Gastrocnemius medialis (tissue), 4 donors: ENCODE measurements at regions of chr3 and their contacts with region 1.

Region 1: GRCh38 chr3:138915503-138916498 is 31.1 kb downstream of the FOXL2 start:
- DNase-seq: peak; percentile 82 to 94
- ATAC-seq: peak; percentile 91 to 93
- H3K4me3 ChIP-seq: peak overlapping the region; percentile 80 to 98 (median 87)
- H3K27ac ChIP-seq: peak overlapping the region; percentile 92 to 95 (median 94)
- H3K4me1 ChIP-seq: peaks cover 3 to 4% of the 10 kb centered on the region in 2 donors
- H3K27me3 ChIP-seq: no peaks in the 10 kb centered on the region
- CTCF ChIP-seq: peak; percentile 86 to 94 (median 89)
- POLR2A ChIP-seq: no peak

Region 2: DNA sequence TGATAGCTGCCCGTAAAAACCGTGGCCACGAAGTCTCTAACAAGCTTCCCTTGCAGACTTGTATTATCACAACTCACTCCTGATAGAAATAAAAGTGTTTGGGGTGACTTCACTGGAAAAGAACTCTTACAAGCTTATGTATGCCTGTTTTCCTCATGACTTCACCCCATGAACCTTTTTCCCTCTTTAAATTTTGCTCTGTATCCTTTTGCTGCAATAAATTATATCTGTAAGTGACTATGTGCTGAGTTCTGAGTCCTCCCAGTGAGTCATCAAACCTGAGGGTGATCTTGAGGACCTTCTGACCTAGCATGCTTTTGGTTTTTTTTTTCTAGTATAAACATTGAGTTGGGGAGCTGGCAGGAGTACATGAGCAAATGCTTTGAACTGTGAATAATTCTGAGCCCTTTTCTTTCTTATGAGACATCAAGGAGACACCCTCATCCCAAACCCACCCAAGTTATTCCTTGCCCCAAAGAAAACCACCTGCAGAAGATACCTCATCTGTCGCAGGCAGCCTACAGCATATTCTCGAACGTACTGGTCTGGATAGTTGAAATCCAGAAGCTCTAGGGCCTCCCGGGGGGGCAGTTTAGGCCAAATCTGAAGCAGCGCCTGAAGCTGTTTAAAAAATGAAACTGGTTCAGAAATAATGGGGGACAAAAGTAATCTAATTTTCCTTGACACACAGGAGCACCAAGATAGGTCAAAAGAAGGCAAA is 221.4 kb before region 1 on chr3:
- in situ Hi-C with region 1: loop called in 3 of 4 experiments (anchors 5 kb)
- intact Hi-C with region 1: loop called (anchors 2 kb)
- DNase-seq: no peak
- ATAC-seq: no peak
- H3K4me3 ChIP-seq: no peak overlapping the region
- H3K27ac ChIP-seq: no peak overlapping the region
- H3K4me1 ChIP-seq: no peaks in the 10 kb centered on the region
- H3K27me3 ChIP-seq: no peaks in the 10 kb centered on the region
- CTCF ChIP-seq: no peak
- POLR2A ChIP-seq: no peak

Region 3: GRCh38 chr3:138774529-138775253 is 141.1 kb before region 1 on chr3:
- in situ Hi-C with region 1: no loop called
- intact Hi-C with region 1: loop called (anchors 10 kb)
- DNase-seq: peak; percentile 75 to 89
- ATAC-seq: peak; percentile 99
- H3K4me3 ChIP-seq: no peak overlapping the region
- H3K27ac ChIP-seq: peak overlapping the region; percentile 77 to 86 (median 78)
- H3K4me1 ChIP-seq: peaks cover 26 to 43% of the 10 kb centered on the region in 2 donors
- H3K27me3 ChIP-seq: no peaks in the 10 kb centered on the region
- CTCF ChIP-seq: no peak
- POLR2A ChIP-seq: no peak

Region 4: GRCh38 chr3:139718415-139718814 is 802.6 kb after region 1 on chr3:
- in situ Hi-C with region 1: no loop called
- intact Hi-C with region 1: no loop called
- DNase-seq: no peak
- ATAC-seq: no peak
- H3K4me3 ChIP-seq: no peak overlapping the region
- H3K27ac ChIP-seq: no peak overlapping the region
- H3K4me1 ChIP-seq: no peaks in the 10 kb centered on the region
- H3K27me3 ChIP-seq: no peaks in the 10 kb centered on the region
- CTCF ChIP-seq: peak in 1 of 5 experiments; percentile 39
- POLR2A ChIP-seq: no peak